ENCODE measurements at regions of chr13 and their contacts with region 1.

Region 1: DNA sequence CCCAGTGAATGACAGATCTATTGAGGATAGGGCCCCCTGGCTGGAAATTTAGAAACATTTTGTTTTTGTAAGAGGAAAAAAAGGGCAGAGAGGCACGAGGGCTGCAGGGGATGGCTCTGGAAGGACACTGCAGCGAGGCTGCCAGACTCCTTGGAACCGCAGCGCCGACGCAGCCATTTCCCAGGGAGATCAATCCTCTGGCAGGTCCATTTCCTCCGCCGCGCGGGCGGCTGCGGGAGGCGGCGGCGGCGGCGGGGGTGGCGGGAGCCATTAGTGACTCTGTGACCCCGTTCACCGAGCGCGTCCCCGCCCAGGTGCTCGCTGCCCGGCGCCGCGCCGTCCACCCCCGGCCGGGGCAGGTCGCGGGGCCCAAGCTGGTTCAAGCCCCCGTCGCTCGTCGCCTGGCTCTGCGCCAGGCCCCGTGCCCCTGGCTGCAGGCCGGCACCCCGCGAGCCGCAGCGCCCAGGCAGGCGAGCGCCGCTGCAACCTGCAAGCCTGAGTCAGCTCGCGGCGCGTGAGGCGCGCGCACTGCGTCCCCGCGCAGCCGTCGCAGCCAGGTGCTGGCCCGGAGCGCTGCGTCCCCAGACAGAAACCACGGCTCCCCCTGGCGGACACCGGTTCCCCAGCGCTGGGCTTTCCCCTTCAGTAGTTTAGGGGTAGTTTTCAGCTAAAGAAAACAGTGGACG is 192.6 kb downstream of the KATNAL1 start:
- DNase-seq: peak; percentile 86
- H3K4me3 Mint-ChIP-seq: peak overlapping the region; percentile 76
- H3K27ac Mint-ChIP-seq: peak overlapping the region; percentile 26
- H3K4me1 Mint-ChIP-seq: peaks cover 33% of the 10 kb centered on the region
- H3K27me3 Mint-ChIP-seq: peaks cover 4% of the 10 kb centered on the region

Region 2: DNA sequence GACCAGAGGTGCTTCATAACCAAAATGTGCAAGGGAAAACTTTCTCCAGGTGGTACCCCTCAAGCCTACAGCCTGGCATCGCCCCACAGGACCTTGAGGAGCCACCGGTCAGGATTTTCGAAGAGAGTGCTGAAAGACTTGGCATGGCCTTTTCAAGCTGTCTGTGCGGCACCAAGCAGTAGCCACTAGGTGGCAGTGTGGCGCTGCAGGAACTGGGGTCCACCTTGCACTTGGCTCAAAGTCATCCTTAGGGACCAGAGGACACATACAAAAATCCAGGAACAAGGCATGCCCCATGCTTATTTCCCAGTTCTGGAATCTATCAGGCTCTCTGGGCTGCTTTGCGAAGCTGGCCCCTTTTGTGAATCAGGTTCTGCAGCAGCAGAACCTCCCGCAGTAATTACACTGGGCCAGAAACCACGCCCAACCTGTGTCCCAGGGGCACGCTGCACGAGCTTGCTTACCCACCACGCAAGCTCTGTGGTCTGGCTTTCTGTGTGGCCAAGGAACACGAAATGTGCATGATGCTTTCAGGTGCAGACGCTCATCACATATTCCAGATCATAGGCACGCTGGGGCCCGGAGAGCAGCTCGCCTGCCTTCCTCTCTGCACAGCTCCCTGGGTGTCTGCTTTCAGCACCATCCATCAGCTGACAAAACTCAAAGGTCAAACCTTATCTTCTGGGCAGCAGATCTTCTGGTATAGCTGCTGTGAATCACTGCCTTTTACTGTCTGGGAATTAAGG is 606.4 kb before region 1 on chr13:
- intact Hi-C with region 1: loop called (anchors 10 kb)
- DNase-seq: peak; percentile 54
- H3K4me3 Mint-ChIP-seq: no peak overlapping the region
- H3K27ac Mint-ChIP-seq: no peak overlapping the region
- H3K4me1 Mint-ChIP-seq: peaks cover 7% of the 10 kb centered on the region
- H3K27me3 Mint-ChIP-seq: peaks cover 3% of the 10 kb centered on the region

Region 3: DNA sequence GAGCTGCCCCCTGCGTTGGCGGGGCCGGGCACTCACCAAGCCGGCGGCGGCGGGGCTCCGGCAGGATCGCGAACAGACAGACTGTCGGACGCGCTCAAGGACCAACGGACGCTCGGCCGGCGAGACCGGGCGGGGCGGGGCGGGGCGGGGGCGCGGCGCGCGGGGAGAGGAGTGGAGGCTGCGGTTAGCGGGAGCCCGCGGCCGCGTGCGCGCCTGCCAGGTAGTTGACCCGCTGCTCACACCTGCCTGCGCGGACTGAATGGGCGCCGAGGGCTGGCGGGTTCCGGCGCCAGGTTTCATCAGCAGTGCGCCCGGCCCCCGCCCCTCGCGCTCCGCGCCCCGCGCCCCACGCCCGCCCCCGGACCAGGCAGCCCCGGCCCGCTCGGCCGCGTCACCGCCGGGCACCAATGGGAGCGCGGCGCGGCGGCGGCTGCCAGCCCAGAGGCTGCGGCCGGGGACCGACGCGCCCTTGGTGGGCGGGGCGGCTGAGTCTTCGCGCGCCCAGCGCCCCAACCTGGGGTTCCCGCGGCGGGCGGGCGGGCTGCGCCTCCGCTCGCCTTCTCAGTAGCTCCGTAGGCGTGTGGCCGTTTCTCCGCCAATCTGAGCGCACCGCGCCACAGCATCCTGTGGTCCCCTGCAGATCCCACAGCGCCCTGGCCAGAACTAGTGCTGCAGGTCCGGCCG is 519.2 kb before region 1 on chr13 and contains the start of gene SLC7A1:
- intact Hi-C with region 1: loop called (anchors 1 kb)
- DNase-seq: peak; percentile 85
- H3K4me3 Mint-ChIP-seq: peak within 1 kb of the TSS; percentile 90
- H3K27ac Mint-ChIP-seq: peak within 1 kb of the TSS; percentile 95
- H3K4me1 Mint-ChIP-seq: peaks cover 39% of the 10 kb centered on the region
- H3K27me3 Mint-ChIP-seq: peaks cover 2% of the 10 kb centered on the region
- total RNA-seq, gene SLC7A1: 111 and 114 TPM in 2 replicates

Region 4: GRCh38 chr13:29771247-29771646 is 343.5 kb before region 1 on chr13:
- intact Hi-C with region 1: loop called (anchors 1 kb)
- DNase-seq: no peak
- H3K4me3 Mint-ChIP-seq: no peak overlapping the region
- H3K27ac Mint-ChIP-seq: no peak overlapping the region
- H3K4me1 Mint-ChIP-seq: peaks cover 2% of the 10 kb centered on the region
- H3K27me3 Mint-ChIP-seq: no peaks in the 10 kb centered on the region

Region 5: GRCh38 chr13:29935309-29935981 is 179.3 kb before region 1 on chr13:
- intact Hi-C with region 1: loop called (anchors 2 kb)
- DNase-seq: peak; percentile 81
- H3K4me3 Mint-ChIP-seq: peak overlapping the region; percentile 67
- H3K27ac Mint-ChIP-seq: peak overlapping the region; percentile 56
- H3K4me1 Mint-ChIP-seq: peaks cover 42% of the 10 kb centered on the region
- H3K27me3 Mint-ChIP-seq: peaks cover 5% of the 10 kb centered on the region

Region 6: DNA sequence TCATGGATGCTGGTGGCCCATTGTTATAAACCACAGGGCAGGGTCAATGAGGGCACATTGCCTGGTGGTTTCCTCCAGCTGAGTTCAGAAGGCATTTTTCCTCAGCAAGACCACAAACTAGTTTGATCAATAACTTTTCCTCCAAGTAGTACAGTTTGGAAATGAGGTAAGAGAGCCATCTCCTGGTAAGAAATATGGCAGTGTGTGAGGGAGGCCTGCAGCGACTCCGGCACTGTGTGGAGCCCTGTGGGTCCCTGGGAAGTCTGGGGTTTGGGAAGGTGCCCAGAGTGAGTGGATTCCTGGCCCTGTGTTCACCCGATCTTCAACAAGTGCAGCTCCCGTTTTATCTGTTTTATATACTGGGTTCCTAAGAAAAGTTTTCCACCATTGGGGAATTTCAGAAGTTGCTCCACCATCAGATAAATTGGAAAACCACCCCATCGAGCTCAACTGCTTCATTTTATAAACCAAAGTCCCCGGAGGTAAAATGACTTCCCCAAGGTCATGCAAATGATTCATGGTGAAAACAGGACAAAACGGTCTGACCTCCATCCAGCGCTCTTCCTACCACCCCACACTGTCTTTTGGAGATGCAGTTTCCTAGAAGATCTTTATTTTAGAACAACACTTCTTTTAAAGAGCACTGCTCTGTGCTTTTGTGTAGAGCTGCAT is 44.2 kb after region 1 on chr13:
- intact Hi-C with region 1: loop called (anchors 5 kb)
- DNase-seq: no peak
- H3K4me3 Mint-ChIP-seq: no peak overlapping the region
- H3K27ac Mint-ChIP-seq: peak overlapping the region; percentile 75
- H3K4me1 Mint-ChIP-seq: peaks cover 37% of the 10 kb centered on the region
- H3K27me3 Mint-ChIP-seq: peaks cover 1% of the 10 kb centered on the region

Measured in activated T-helper 2 cell treated with anti-CD3 and anti-CD28 coated beads, Interferon-gamma antibody, Interleukin-2, Interleukin-4, amounts not matched to agents 10 μg/mL and 5 μg/mL and 100 μg/mL, durations not matched to agents 14 hours and 24 hours and 36 hours (primary cell).